Sciatic nerve (tissue), 2 donors: ENCODE measurements at regions of chr7 and their contacts with region 1.

Region 1: GRCh38 chr7:139767561-139767982 is 10.2 kb downstream of the HIPK2 start:
- DNase-seq: no peak
- ATAC-seq: no peak

Region 2: GRCh38 chr7:139252451-139252850 is 515.1 kb before region 1 on chr7:
- intact Hi-C with region 1: loop called (anchors 10 kb)
- DNase-seq: no peak
- ATAC-seq: peak; percentile 82

Region 3: GRCh38 chr7:139557857-139558581 is 209.6 kb before region 1 on chr7:
- intact Hi-C with region 1: no loop called
- DNase-seq: no peak
- ATAC-seq: no peak

Region 4: DNA sequence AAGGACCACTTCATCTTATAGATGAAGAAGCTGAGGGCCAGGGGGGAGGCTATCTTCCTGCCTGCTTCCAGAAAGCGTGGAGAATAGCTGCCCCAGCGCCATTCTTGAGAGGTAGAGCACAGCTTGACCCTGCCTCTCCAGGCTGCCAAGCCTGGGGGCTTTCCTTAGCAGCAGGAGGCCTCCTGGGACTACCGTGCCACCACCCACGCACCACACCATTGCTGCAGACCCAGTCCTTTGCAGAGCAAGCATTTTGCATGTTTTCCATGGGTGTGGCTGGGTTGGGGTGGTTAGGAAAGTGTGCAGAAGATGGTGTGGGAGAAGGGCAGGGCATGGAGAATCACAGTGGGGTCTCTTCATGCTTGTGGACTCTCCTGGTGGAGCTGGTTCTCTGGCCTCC is 126.4 kb after region 1 on chr7:
- intact Hi-C with region 1: no loop called
- DNase-seq: no peak
- ATAC-seq: no peak